ENCODE measurements at regions of chr1 and their contacts with region 1.

Region 1: DNA sequence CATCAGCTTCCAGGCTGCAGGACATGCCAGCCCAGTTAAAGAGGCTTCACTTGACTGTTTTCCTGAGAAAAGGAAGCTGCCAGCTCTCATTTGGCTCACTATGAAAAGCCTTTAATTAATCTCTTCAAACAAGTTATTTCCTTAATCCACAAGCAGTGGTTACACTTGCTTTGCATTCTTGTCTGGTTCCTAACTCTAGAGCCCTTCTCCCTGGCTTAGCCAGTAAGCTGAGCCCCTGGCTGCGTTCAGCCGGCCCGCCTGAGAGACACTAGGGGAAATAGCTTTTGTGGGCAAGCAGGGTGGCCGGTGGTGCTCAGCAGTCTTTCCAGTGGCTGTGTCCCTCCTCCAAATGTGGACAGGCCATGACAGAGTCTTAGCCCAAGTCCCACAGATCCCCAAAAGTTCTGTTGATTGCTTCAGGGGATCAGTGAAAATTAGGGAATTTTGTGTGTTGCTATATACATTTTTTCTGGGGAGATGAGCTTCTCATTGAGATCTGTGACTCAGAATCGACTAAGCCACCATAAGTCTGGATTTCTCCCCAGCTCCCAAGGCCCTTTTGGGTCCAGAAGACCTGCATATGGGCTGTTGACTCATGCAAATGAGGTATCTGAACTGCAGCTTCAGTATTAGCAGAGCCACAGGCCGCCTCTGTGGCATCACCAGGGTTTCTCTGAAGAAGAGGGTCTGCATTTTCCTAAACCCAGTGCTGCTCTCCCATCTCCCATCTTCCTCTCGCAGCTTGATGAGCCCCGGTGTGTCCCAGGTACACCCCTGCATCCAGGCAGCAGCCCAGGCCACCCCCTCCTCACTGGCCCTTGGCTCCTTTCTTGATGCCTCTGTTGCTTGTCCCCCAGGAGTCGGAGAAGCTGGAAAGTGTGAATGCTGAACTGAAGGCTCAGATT is 10.2 kb downstream of the ATF3 start:
- DNase-seq: no peak
- H3K4me3 ChIP-seq: no peak overlapping the region
- CTCF ChIP-seq: no peak

Region 2: DNA sequence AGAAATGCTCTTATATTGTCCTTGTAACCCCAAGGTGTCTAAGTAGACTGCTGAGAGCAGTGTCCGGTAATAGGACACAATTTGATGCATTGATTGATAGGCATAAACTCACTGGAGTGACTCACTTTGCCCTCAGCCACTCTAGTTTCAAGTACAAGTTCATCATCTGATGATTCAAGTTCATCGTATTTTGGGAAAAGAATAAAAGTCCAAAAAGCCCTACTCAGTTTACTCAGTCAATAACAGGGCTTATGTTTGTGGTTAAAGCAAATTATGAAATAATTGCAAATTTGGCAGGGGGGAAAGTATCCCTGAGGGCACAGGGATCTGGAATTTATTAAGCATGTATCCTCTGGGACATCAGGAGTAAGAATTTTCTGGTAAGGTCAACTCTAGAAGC is 17.8 kb before region 1 on chr1:
- CTCF ChIA-PET with region 1: no interaction called
- POLR2A ChIA-PET with region 1: no interaction called
- DNase-seq: no peak
- H3K4me3 ChIP-seq: no peak overlapping the region
- CTCF ChIP-seq: no peak

Region 3: GRCh38 chr1:212630158-212630900 is 11.6 kb after region 1 on chr1:
- CTCF ChIA-PET with region 1: interaction called, 40 read pairs
- POLR2A ChIA-PET with region 1: no interaction called
- DNase-seq: no peak
- H3K4me3 ChIP-seq: no peak overlapping the region
- CTCF ChIP-seq: peak; percentile 91